Endothelial cell of umbilical vein (primary cell): ENCODE measurements at regions of chr13 and their contacts with region 1.

Region 1: GRCh38 chr13:89307278-89307677 is 1636.1 kb downstream of the SLITRK5 start:
- DNase-seq: no peak
- H3K4me3 ChIP-seq: no peak overlapping the region
- H3K27ac ChIP-seq: no peak overlapping the region
- H3K4me1 ChIP-seq: no peaks in the 10 kb centered on the region
- H3K27me3 ChIP-seq: no peaks in the 10 kb centered on the region
- CTCF ChIP-seq: no peak
- POLR2A ChIP-seq: no peak

Region 2: DNA sequence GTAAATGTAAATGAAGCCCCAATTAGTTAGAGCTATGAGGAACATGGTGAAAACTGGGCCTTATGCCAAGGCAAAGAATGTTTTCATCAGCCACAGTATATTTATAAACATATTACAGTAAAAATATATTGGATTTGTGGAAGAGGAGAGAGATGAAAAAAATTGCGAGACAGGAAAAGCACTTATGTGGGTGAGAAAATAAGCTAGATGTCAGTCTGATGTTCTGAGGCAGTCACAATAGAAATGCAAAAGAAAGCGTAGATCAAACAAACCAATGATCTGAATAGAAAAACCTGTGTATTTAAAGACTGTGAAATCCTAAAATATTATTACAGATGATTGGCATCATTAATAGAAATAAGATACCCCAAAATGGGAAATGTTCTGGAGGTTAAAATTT is 303.6 kb before region 1 on chr13:
- CTCF ChIA-PET with region 1: no interaction called
- POLR2A ChIA-PET with region 1: no interaction called
- dilution Hi-C with region 1: no loop called
- intact Hi-C with region 1: no loop called
- DNase-seq: no peak
- H3K4me3 ChIP-seq: no peak overlapping the region
- H3K27ac ChIP-seq: no peak overlapping the region
- H3K4me1 ChIP-seq: no peaks in the 10 kb centered on the region
- H3K27me3 ChIP-seq: no peaks in the 10 kb centered on the region
- CTCF ChIP-seq: no peak
- POLR2A ChIP-seq: no peak

Region 3: DNA sequence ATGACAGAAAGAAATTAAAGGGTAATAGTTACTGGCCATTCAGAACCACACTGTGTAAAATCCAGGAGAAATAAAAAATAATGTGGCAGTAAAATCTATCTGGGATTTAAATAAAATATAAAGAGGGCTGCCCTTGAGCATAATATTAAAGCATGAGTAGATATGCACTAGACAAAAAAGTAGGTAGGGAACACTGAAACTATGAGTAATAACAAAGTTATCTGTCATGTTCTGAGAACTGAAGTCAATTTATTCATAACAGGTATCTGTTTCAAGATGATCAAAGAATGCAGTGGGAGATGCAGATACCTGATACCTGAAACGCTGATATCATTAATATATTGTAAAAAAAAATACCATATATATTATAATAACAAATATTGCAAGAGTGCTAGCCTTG is 35.9 kb after region 1 on chr13:
- CTCF ChIA-PET with region 1: no interaction called
- POLR2A ChIA-PET with region 1: no interaction called
- dilution Hi-C with region 1: no loop called
- intact Hi-C with region 1: loop called (anchors 2 kb)
- DNase-seq: no peak
- H3K4me3 ChIP-seq: no peak overlapping the region
- H3K27ac ChIP-seq: no peak overlapping the region
- H3K4me1 ChIP-seq: no peaks in the 10 kb centered on the region
- H3K27me3 ChIP-seq: no peaks in the 10 kb centered on the region
- CTCF ChIP-seq: no peak
- POLR2A ChIP-seq: no peak

Region 4: GRCh38 chr13:89514534-89515312 is 207.4 kb after region 1 on chr13:
- CTCF ChIA-PET with region 1: no interaction called
- POLR2A ChIA-PET with region 1: no interaction called
- dilution Hi-C with region 1: no loop called
- intact Hi-C with region 1: no loop called
- DNase-seq: peak; percentile 97
- H3K4me3 ChIP-seq: no peak overlapping the region
- H3K27ac ChIP-seq: peak overlapping the region; percentile 98
- H3K4me1 ChIP-seq: peaks cover 29% of the 10 kb centered on the region
- H3K27me3 ChIP-seq: no peaks in the 10 kb centered on the region
- CTCF ChIP-seq: no peak
- POLR2A ChIP-seq: peak; percentile 42